ENCODE measurements at regions of chr18 and their contacts with region 1.

Region 1: DNA sequence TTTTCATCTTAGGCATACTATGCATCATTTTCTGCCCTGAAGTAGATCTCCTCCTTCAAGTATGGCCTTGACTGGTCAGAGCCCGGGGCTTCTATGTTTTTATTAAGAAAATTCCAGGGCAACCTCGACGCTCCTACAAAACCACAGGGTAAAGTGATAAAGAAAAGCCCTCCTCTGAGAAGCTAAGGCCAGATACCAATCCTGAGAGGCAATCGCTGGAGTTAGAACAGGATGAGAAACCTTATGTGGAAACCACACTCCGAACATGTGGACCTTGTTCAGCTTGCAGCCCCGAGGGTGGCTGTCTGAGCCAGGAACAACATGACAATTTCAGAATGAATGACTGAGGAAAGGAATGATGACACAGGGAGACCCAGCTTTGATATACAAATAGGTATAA is 35.6 kb downstream of the RMC1 start:
- DNase-seq: no peak
- H3K4me3 ChIP-seq: peak overlapping the region in 1 of 3 experiments; percentile 37
- H3K4me3 Mint-ChIP-seq: peak overlapping the region in 1 of 2 donors; percentile 60
- H3K27ac ChIP-seq: peak overlapping the region in 1 of 2 donors; percentile 79
- H3K27ac Mint-ChIP-seq: peak overlapping the region in 4 of 7 donors; percentile 3 to 90 (median 58)
- H3K4me1 ChIP-seq: peaks cover 49 to 56% of the 10 kb centered on the region in 2 donors
- H3K4me1 Mint-ChIP-seq: peaks cover 51% of the 10 kb centered on the region
- H3K27me3 ChIP-seq: no peaks in the 10 kb centered on the region
- H3K27me3 Mint-ChIP-seq: peaks cover 0 to 8% (median 1%) of the 10 kb centered on the region in 3 donors
- CTCF ChIP-seq: no peak

Region 2: DNA sequence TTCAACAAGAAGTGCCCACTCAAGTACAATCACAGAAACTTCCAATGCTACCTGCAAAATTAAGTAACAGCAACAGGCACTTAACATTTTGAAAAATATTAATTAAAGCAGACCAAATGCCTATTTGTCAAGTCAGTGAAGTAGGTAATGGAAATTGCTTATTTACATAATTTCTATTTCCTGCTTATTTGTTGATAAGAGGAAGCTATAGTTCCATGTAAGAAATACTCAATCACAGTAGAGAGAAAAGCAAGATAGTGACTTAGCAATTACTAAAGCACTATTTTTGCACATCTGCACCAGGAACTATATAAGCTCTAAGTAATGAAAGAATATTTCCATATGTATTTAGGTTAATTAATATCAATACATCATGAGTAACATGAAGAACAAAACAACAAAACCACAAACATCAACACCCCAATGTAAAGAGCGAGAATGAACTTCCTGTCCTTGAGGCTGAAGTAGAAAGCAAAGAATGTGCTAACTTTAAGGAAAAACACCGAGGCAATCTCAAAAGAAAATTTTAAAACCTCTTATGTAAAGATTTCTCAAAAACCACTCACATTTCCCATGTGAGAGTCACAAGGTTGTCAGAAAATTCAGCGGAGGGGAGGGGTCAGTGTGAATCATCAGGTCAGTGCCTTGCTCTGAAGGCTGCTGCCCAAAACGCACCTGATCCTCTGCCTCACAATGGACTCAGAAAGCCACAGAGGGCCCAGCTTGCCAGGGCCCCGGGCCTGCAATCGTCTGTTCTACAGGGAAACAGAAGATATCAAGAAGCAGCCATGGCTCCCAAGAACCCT is 35.0 kb after region 1 on chr18:
- intact Hi-C with region 1: loop called in 1 of 2 experiments (anchors 5 kb)
- DNase-seq: peak; percentile 61 to 85 (median 69)
- H3K4me3 ChIP-seq: peak overlapping the region in 1 of 3 experiments; percentile 35
- H3K4me3 Mint-ChIP-seq: peak overlapping the region in 1 of 2 donors; percentile 30
- H3K27ac ChIP-seq: peak overlapping the region; percentile 54 to 81
- H3K27ac Mint-ChIP-seq: peak overlapping the region; percentile 61 to 94 (median 88)
- H3K4me1 ChIP-seq: peaks cover 30 to 36% of the 10 kb centered on the region in 2 donors
- H3K4me1 Mint-ChIP-seq: peaks cover 31% of the 10 kb centered on the region
- H3K27me3 ChIP-seq: no peaks in the 10 kb centered on the region
- H3K27me3 Mint-ChIP-seq: peaks cover 0 to 2% (median 0%) of the 10 kb centered on the region in 3 donors
- CTCF ChIP-seq: no peak